Panc1 (cell line): ENCODE measurements at regions of chr15 and their contacts with region 1.

Region 1: DNA sequence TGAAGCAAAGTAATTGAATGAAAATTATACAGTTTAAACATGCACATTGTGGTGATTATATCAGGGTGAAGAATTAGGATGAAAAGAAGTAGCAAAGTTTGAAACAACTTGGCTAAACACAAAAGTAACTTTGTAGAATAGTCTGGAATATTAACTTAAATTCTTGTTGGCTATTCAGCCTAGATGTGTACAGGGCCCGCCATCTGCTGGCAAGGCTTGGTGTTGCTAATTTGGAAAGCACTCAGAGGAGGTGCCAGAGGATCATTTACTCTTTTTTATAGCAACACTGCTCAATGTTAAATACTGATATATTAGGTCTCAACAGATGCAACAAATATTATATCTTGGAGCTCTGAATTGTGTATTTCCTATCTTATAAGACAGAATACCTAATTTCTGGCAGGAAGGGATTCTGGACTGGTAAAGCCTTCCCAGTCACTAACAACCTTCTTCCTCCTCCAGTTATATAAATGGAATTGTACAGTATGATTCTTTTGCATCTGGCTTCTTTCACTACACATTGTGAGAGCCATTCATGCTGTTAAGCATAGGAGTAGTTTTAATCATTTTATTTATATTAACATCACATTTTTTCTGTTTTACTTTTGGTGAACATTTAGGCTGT is 36.1 kb downstream of the TTC23 start:
- DNase-seq: peak; percentile 51
- ATAC-seq: peak; percentile 93
- H3K4me3 ChIP-seq: no peak overlapping the region
- H3K27ac ChIP-seq: no peak overlapping the region
- H3K4me1 ChIP-seq: no peaks in the 10 kb centered on the region
- H3K27me3 ChIP-seq: no peaks in the 10 kb centered on the region
- CTCF ChIP-seq: peak; percentile 88

Region 2: GRCh38 chr15:99100245-99101173 is 112.8 kb before region 1 on chr15:
- CTCF ChIA-PET with region 1: interaction called, 9 read pairs
- POLR2A ChIA-PET with region 1: no interaction called
- in situ Hi-C with region 1: no loop called
- intact Hi-C with region 1: loop called (anchors 2 kb)
- DNase-seq: no peak
- ATAC-seq: peak; percentile 66
- H3K4me3 ChIP-seq: peak overlapping the region; percentile 38 to 55
- H3K27ac ChIP-seq: no peak overlapping the region
- H3K4me1 ChIP-seq: no peaks in the 10 kb centered on the region
- H3K27me3 ChIP-seq: no peaks in the 10 kb centered on the region
- CTCF ChIP-seq: peak; percentile 96

Region 3: DNA sequence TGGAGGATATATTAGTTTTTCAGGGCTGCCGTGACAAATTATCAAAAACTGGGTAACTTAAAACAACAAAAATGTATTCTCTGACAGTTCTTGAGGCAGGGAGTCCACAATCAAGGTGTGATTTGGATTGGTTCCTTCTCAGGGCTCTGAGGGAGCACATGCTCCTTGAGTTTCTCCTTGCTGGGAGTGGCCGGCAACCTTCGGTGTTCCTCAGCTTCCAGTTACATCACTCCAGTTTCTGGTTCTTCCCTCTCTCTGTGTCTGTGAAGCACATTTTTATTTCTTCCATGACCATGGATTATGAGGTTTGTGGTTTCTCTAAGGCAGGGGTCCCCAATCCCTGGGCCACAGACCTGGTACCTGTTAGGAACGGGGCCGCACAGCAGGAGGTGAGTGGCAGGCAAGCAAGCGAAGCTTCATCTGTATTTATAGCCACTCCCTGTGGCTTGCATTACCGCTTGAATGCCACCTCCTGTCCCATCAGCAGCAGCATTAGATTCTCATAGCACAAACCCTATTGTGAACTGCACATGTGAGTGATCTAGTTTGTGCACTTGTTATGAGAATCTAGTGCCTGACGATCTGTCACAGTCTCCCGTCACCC is 62.3 kb after region 1 on chr15:
- CTCF ChIA-PET with region 1: no interaction called
- POLR2A ChIA-PET with region 1: no interaction called
- in situ Hi-C with region 1: no loop called
- intact Hi-C with region 1: no loop called
- DNase-seq: no peak
- ATAC-seq: no peak
- H3K4me3 ChIP-seq: no peak overlapping the region
- H3K27ac ChIP-seq: no peak overlapping the region
- H3K4me1 ChIP-seq: no peaks in the 10 kb centered on the region
- H3K27me3 ChIP-seq: no peaks in the 10 kb centered on the region
- CTCF ChIP-seq: no peak

Region 4: DNA sequence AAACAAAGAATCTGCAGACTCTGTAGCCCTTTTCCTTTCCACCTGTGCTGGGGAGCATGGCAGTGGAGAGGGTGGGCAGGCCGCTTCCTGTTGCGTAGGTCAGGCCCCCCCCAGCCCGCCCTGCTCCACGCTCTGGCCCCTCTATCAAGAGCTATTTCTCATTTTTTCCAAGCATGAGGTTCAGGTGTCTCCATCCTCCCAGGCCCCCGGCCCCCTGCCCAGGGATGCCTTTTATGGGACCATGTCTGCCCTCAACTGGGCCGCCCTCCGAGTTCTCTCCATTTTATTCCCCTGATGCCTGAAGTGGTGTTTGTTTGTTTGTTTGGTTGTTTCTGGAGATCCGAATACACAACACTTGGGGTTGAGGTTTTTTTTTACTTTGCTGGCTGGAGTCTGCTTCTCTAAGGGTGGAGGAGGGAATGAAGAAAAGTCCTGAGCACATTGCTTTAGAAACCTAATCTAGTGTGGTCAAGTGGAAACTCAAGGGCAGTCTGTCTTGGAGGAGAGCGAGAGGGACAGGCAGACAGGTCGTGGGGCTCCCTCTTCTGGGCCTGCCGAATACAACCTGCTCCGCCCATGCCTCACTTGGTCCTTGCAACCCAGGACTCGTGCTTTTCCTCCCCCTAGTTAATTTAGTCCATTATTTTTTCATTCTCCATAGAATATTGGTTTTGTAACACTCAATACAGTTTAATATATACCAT is 696.4 kb after region 1 on chr15:
- CTCF ChIA-PET with region 1: no interaction called
- POLR2A ChIA-PET with region 1: no interaction called
- in situ Hi-C with region 1: no loop called
- intact Hi-C with region 1: no loop called
- DNase-seq: no peak
- ATAC-seq: peak; percentile 93
- H3K4me3 ChIP-seq: no peak overlapping the region
- H3K27ac ChIP-seq: no peak overlapping the region
- H3K4me1 ChIP-seq: no peaks in the 10 kb centered on the region
- H3K27me3 ChIP-seq: no peaks in the 10 kb centered on the region
- CTCF ChIP-seq: peak; percentile 84